ENCODE measurements at regions of chr16 and their contacts with region 1.

Region 1: GRCh38 chr16:15548482-15548891 is 94.5 kb downstream of the MARF1 start:
- DNase-seq: no peak
- H3K4me3 ChIP-seq: no peak overlapping the region
- CTCF ChIP-seq: no peak

Region 2: GRCh38 chr16:15396948-15397594 is 151.4 kb before region 1 on chr16:
- CTCF ChIA-PET with region 1: no interaction called
- POLR2A ChIA-PET with region 1: no interaction called
- DNase-seq: no peak
- H3K4me3 ChIP-seq: no peak overlapping the region
- CTCF ChIP-seq: no peak

Region 3: GRCh38 chr16:15559176-15559575 is 10.7 kb after region 1 on chr16:
- CTCF ChIA-PET with region 1: interaction called, 22 read pairs
- POLR2A ChIA-PET with region 1: no interaction called
- DNase-seq: no peak
- H3K4me3 ChIP-seq: no peak overlapping the region
- CTCF ChIP-seq: no peak

Region 4: DNA sequence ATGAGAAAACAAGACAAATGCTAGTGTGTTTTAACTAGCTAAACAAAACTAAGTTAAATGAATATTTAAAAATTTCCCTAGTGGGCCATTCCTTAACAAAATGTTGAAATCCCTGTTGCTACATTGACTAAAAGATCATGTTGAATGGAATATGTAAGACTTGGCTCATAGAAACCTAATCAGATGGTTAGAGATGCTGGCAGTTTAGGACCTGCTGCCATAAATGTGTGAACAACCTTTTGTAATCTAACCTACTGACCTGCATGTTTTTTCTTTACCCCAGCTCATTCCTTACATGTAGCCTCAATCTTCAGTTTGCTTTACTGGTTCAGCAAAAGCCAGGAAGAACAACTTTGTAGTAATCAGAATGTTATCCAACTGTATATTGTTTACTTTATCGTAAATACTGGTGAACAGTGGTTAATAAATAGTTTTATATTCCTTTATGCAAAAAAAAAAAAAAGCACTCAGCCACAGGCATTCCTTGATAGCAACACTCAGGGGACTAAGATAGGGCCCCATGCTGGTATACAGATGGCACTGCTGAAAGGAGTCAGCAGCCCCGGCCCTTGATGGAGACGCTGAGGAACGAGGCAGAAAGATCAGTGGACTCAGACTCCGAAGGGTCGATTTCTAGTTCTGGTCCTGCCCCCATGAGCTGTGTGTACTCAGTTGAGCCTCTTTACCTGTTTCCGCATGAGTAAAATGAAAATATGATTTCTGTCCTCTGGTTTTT is 16.3 kb after region 1 on chr16:
- CTCF ChIA-PET with region 1: interaction called, 22 read pairs
- POLR2A ChIA-PET with region 1: no interaction called
- DNase-seq: no peak
- H3K4me3 ChIP-seq: no peak overlapping the region
- CTCF ChIP-seq: no peak